PC-3 (cell line): ENCODE measurements at regions of chr7 and their contacts with region 1.

Region 1: GRCh38 chr7:51376420-51377092 is 59.9 kb upstream of the COBL start:
- DNase-seq: peak; percentile 91
- ATAC-seq: peak; percentile 97
- H3K4me3 ChIP-seq: no peak overlapping the region
- H3K27ac ChIP-seq: peak overlapping the region; percentile 80
- H3K4me1 ChIP-seq: peaks cover 17% of the 10 kb centered on the region
- H3K27me3 ChIP-seq: no peaks in the 10 kb centered on the region
- CTCF ChIP-seq: no peak

Region 2: GRCh38 chr7:51154201-51154600 is 222.4 kb before region 1 on chr7:
- CTCF ChIA-PET with region 1: no interaction called
- POLR2A ChIA-PET with region 1: no interaction called
- intact Hi-C with region 1: no loop called
- DNase-seq: no peak
- ATAC-seq: no peak
- H3K4me3 ChIP-seq: no peak overlapping the region
- H3K27ac ChIP-seq: no peak overlapping the region
- H3K4me1 ChIP-seq: no peaks in the 10 kb centered on the region
- H3K27me3 ChIP-seq: no peaks in the 10 kb centered on the region
- CTCF ChIP-seq: no peak

Region 3: DNA sequence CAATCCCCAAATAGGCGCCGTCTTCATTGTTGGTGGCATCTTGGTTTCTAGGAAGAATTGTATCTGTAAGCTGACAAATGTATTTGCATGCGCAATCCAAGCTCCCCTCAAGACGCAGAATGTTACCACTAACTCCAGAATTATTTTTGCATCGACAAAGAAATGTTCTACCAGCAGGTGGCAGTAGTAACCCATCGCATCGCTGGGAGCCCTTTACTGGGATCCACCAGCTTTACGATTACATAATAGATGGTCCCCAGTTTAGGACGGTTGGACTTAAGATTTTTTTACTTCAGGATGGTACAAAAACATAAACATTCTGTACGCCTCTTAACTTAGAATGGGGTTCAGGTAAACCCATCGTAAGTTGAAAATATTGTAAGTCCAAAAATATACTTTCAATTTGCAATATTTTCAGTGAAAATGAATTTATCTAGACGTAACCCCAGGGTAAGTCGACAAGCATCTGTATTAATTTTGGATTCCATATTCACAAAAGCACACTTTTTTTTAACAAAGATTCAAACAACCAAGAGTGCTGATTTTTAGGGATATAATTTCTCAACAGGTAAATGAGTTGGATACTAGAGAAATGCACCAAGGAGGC is 54.0 kb after region 1 on chr7:
- CTCF ChIA-PET with region 1: interaction called, 13 read pairs
- POLR2A ChIA-PET with region 1: no interaction called
- intact Hi-C with region 1: loop called (anchors 1 kb)
- DNase-seq: peak; percentile 76
- ATAC-seq: peak; percentile 46; the same call in 1 of the 2 replicates
- H3K4me3 ChIP-seq: no peak overlapping the region
- H3K27ac ChIP-seq: no peak overlapping the region
- H3K4me1 ChIP-seq: no peaks in the 10 kb centered on the region
- H3K27me3 ChIP-seq: peaks cover 23% of the 10 kb centered on the region
- CTCF ChIP-seq: peak; percentile 83

Region 4: DNA sequence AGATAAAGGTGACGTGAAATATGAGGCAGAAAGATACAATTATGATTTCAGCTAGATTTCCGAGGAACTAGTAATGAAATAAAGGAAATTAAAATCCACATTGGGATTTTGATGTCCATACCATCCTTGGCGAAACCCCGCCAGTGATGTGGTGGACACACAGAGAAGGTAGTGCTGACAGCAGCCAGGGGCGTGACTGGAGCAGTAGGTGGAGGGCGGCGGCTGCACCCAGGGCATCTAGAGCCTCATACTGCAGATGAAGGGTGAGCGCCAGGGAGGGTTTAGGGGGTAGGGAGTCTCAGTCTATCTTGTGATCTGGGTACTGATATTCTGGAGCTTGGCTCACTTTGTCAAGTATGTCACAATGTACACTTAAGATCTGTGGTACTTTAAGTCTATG is 803.4 kb after region 1 on chr7:
- CTCF ChIA-PET with region 1: no interaction called
- POLR2A ChIA-PET with region 1: no interaction called
- intact Hi-C with region 1: no loop called
- DNase-seq: no peak
- ATAC-seq: no peak
- H3K4me3 ChIP-seq: no peak overlapping the region
- H3K27ac ChIP-seq: no peak overlapping the region
- H3K4me1 ChIP-seq: no peaks in the 10 kb centered on the region
- H3K27me3 ChIP-seq: no peaks in the 10 kb centered on the region
- CTCF ChIP-seq: no peak